HEK293T (cell line): ENCODE measurements at regions of chr22 and their contacts with region 1.

Region 1: DNA sequence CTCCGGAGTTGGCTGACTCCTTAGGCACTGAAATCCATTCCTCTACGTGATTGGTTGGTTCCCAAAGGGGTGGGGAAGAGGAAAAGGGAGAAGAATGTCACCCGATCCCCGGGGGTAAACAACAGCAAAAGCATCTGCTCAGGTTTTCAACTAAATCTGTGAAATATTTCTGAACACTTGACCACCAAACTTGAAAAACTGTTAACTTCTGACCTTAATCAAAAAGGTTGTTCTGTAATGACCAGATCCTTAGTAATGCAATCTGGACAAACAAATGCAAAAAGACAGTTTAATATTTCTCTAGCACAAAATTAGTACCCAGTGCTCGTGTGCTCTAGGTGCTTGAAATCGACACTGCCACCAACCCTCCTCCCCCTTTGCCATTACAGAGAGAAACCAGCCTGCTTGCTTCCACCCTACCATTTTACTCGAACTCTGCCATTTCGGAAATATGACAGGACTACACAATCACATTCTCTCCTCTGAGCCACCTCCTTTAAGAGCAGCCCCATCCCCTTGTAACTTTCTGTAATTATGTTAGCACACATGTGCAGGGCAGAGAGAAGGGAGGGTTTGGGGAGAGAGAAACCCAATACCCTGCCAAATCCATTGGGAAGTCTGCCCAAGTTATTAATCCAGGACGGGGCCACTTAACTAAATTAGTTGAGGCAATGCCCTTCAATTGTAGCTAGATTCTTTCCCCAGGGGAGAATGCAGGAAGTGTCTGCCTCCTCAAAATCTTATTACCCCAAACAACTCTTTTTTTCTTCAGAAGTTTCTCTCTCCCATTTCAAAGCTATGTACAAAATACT is 113.8 kb downstream of the RBFOX2 start:
- DNase-seq: peak; percentile 83

Region 2: GRCh38 chr22:35903571-35904335 is 11.1 kb before region 1 on chr22:
- CTCF ChIA-PET with region 1: interaction called, 3 read pairs
- POLR2A ChIA-PET with region 1: interaction called, 10 read pairs
- DNase-seq: no peak

Region 3: DNA sequence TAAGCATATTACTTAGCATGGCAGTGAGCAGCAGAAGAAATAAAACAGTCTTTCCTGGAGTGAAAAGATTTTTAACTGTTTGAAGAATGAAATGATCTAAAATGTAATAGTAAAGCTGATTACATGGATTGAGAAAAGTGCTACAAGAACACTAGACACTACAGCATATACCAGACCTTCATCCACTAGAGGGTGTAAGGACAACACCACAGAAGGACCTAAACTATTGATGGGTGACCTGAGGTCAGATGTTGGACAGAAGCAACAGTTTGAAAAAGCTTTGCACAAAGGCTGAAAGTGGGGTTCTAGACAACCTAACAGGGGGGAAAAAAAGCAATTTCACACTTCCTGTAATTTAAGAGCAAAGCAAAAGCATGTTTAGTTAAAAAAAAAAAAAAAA is 16.1 kb after region 1 on chr22:
- CTCF ChIA-PET with region 1: no interaction called
- POLR2A ChIA-PET with region 1: no interaction called
- DNase-seq: peak; percentile 55